HEK293 (cell line): ENCODE measurements at regions of chr10 and their contacts with region 1.

Region 1: GRCh38 chr10:4780782-4781181 is 45.2 kb upstream of the AKR1E2 start:
- H3K4me3 ChIP-seq: no peak overlapping the region
- H3K27ac ChIP-seq: no peak overlapping the region
- H3K4me1 ChIP-seq: no peaks in the 10 kb centered on the region
- CTCF ChIP-seq: no peak

Region 2: DNA sequence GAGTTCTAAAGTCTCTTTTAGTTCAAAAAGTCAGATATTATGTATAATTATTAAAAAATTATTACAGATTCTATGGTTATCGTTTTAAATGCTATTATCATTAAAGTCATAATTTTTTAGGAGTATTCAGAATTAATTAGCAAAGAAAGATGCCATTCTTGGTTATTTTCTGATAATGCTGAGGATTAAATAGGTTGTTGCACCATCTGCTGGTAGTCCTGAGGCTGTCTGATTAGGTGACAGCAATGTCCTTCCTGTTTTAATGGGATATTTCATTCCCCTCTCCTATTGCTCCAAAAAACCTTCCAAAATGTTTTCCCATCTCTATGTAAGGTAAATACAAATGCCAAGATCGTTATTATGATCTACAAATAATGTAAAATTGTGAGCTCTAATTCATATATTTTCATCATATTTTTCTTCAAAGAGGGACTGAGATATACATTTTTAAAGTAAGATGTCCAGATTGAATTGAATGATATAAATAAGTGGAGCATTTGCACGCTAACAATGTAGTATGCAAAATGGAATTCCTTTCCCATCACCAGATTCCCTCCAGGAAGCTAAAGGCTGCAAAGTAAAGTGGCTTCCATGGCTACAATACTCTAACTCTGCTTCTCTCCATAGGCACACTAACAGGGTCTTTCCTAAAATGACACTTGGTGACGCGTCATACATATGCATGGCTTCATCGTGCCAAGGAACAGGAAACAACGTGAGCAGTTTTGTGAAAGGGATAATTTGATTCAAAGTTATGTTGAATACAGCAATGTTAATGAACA is 13.6 kb before region 1 on chr10:
- CTCF ChIA-PET with region 1: interaction called, 14 read pairs
- POLR2A ChIA-PET with region 1: no interaction called
- H3K4me3 ChIP-seq: no peak overlapping the region
- H3K27ac ChIP-seq: no peak overlapping the region
- H3K4me1 ChIP-seq: 0 out of 2 replicates have a peak, but pooled peaks cover 5% of the 10 kb centered on the region
- CTCF ChIP-seq: 0 out of 2 replicates have a peak, but pooled peaks have one; percentile 13